ENCODE measurements at regions of chr1 and their contacts with region 1.

Region 1: DNA sequence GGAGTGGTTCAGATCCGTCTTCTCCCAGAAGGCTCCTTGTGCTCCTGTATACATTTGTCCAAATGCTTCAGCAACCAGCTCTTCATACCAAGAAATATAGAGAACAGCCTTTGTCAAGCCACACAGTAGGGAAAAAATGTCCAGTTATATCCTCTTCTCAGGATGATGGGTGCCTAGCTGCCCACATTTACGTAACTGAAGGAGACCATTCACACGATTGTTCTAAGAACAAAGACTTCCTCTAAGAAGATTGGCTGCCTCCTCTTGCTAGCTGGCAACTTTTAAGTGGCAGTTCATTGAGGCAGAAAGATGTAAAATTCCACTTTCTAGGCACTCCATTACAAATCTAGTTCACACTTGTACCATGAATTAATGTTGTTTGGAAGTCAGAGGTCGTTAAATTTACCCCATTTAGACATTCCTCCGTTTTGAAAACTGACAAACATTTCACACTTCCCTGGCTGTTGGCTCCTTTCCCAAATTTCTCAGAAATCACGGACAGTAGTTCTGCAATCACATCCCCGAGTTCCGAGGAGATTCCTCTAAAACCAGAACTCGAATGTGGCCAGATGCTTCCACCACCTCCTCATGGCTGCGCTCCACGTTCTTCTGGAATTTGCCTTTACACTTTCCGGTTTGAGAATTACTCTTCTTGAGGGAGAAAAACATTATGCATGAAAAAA is 45.6 kb upstream of the CSF1 start:
- DNase-seq: no peak
- H3K4me3 ChIP-seq: no peak overlapping the region
- H3K27ac ChIP-seq: peak overlapping the region; percentile 44 to 73 (median 56)
- H3K4me1 ChIP-seq: peaks cover 4 to 24% (median 23%) of the 10 kb centered on the region in 4 donors
- H3K27me3 ChIP-seq: no peaks in the 10 kb centered on the region
- CTCF ChIP-seq: no peak
- EP300 ChIP-seq: no peak
- POLR2A ChIP-seq: no peak

Region 2: DNA sequence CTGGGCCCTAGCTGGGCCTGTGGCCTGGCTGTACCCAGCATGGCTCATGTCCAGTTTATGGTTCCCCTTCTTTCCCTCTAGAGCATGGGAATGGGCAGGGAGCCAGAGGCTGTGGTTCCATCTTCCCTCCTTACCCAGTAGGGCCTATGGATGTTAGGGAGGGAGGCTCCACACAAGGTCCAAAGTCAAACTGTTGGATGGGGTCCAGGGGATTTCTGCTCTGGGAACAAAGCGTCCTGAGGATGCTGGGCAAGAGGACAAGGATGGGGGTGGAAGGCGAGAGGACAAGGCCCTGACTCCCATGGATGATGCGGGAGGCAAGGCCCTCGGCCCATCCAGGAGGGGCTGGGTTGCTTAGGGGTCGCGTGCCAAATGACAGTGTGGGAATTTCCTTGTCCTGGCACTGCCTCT is 62.8 kb after region 1 on chr1:
- intact Hi-C with region 1: loop called (anchors 5 kb)
- DNase-seq: peak; percentile 95
- H3K4me3 ChIP-seq: no peak overlapping the region
- H3K27ac ChIP-seq: peak overlapping the region; percentile 76 to 85 (median 84)
- H3K4me1 ChIP-seq: peaks cover 51 to 72% (median 68%) of the 10 kb centered on the region in 4 donors
- H3K27me3 ChIP-seq: no peaks in the 10 kb centered on the region
- CTCF ChIP-seq: no peak
- EP300 ChIP-seq: peak; percentile 55
- POLR2A ChIP-seq: no peak

Measured in esophagus muscularis mucosa (tissue), 4 donors.